ENCODE measurements at regions of chr5 and their contacts with region 1.

Region 1: DNA sequence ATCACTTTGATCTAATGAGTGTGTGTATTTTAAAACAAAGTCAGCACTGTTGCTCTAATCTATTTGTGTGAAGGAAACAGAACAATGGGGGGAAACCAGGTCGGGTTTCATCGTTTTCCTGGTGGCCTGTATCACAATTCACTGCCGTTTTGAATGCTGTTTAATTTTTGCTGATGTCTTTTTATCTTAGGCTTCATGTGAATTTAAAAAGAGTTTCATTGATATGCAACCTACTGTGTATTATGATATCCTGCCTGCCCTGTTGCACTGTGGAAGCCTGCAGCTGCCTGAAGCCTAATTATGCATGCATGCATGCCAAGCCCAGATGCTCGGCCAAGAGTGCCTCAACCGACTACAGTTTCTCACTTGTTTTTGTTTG is 307.5 kb downstream of the ZNF608 start:
- DNase-seq: peak; percentile 74
- H3K4me3 ChIP-seq: peak overlapping the region; percentile 5
- H3K27ac ChIP-seq: peak overlapping the region; percentile 45
- H3K4me1 ChIP-seq: peaks cover 32% of the 10 kb centered on the region
- CTCF ChIP-seq: no peak

Region 2: GRCh38 chr5:123628860-123629556 is 809.9 kb before region 1 on chr5:
- CTCF ChIA-PET with region 1: no interaction called
- POLR2A ChIA-PET with region 1: no interaction called
- intact Hi-C with region 1: no loop called
- DNase-seq: no peak
- H3K4me3 ChIP-seq: no peak overlapping the region
- H3K27ac ChIP-seq: no peak overlapping the region
- H3K4me1 ChIP-seq: no peaks in the 10 kb centered on the region
- CTCF ChIP-seq: no peak

Region 3: DNA sequence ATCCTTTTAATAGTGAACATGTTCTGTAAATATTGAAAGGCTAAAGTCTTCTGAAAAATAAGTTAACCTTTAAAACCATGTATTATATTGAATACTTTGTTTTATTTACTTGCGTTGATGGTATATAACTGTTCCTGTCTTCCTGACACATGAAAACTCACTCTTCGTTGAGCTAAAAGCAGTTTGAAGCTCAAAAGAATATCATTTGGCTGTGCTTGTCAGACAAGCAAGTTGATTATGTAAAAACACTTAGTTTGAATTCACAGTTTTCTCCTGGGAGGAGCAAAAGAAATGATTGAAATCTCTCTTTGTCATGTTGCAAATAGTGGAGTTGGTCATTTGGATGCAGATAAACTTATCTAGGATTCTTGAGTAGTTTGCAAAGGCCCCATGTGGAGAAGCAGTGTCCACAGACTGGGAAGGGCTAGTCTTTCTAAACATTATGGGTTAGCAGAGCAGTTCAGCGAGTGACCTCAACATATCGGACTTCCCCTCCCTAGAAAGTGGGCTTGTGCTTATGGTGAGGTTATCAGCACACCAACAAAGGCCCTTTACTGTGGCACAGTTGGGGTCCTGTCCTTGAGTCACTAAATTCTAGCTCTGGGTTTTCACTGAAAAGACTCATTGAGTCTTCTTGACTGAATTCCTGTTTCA is 636.5 kb before region 1 on chr5:
- CTCF ChIA-PET with region 1: no interaction called
- POLR2A ChIA-PET with region 1: no interaction called
- intact Hi-C with region 1: no loop called
- DNase-seq: no peak
- H3K4me3 ChIP-seq: no peak overlapping the region
- H3K27ac ChIP-seq: no peak overlapping the region
- H3K4me1 ChIP-seq: no peaks in the 10 kb centered on the region
- CTCF ChIP-seq: no peak

Region 4: DNA sequence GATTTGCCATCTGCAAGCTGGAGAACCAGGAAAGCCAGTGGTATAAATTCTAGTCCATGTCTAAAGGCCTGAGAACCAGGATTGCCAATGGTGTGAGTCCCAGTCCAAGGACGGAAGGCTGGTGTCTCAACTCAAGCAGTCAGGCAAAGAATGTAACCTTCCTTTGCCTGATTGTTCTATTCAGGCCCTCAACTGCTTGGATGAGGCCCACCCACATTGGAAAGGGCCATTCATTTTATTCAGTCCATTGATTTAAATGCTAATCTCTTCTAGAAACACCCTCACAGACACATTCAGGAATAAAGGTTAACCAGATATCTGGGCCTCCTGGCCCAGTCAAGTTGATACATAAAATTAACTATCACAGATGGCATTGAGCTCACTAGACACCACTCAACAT is 120.2 kb before region 1 on chr5:
- CTCF ChIA-PET with region 1: no interaction called
- POLR2A ChIA-PET with region 1: no interaction called
- intact Hi-C with region 1: no loop called
- DNase-seq: no peak
- H3K4me3 ChIP-seq: no peak overlapping the region
- H3K27ac ChIP-seq: no peak overlapping the region
- H3K4me1 ChIP-seq: no peaks in the 10 kb centered on the region
- CTCF ChIP-seq: no peak

Region 5: DNA sequence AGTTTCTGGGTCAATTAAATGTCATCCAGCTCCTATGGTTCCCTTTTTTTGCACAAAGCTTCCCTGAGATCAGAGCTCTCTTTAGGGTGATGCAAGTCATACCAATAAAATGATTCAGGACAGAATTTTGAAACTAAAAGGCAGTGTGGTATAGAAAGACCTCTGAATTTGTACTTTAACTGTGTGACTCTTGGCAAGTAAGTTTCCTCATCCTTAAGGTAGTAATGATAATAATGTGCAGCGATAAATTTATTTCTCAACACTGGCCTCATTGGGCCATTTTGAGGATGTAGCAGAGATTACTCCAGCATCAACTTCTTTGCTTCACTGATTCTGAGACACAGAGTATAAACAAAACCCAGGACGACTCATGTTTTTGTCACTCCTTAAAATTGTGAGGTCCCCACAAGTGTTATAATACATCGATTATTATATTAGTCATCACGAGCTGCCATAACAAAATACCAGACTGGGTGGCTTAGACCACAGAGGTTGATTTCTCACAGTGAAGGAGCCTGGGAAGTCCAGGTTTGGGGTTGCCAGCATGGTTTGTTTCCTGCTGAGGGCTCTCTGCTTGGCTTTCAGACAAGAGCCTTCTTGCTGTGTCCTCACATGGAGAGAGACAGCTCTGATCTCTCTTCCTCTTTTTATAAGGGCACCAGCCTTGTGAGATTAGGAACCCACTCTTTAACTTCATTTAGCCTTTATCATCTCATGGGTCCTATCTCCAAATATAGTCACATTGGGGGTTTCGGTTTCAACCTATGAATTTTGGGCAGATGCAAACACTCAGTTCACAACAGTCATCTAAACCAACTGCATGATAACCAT is 14.5 kb after region 1 on chr5:
- CTCF ChIA-PET with region 1: interaction called, 3 read pairs
- POLR2A ChIA-PET with region 1: interaction called, 23 read pairs
- intact Hi-C with region 1: no loop called
- DNase-seq: peak; percentile 91
- H3K4me3 ChIP-seq: peak overlapping the region; percentile 19
- H3K27ac ChIP-seq: peak overlapping the region; percentile 86
- H3K4me1 ChIP-seq: peaks cover 63% of the 10 kb centered on the region
- CTCF ChIP-seq: 0 out of 2 replicates have a peak, but pooled peaks have one; percentile 25